ENCODE measurements at regions of chr4 and their contacts with region 1.

Region 1: DNA sequence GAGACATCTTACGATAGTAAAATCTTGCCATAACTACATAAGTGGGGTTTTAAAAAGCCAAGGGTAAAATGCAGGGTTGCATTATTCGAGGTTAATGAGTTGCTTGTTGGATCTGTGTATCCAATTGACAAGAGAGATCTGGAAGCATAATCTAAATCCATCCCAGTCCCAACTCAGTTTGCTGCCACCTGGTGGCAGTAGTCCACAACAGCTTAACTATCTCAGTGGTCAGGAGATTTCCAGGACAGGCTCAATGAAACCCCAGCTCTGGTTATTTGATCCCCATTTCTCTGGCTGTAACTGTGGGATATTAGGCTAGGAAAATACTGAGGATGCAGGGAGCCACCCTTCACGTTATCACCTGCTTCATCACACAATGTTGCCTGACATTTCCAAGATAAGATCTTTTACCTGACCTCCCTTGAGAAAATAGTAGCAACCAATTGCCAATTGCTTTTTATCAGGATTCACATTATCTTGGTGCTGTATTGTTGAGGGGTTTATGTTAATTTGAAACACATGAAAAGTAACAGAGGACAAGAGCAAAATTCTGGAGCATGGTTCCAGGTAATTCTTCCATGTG is 88.2 kb upstream of the TNIP3 start:
- DNase-seq: peak; percentile 73
- H3K4me3 Mint-ChIP-seq: no peak overlapping the region
- H3K27ac Mint-ChIP-seq: no peak overlapping the region
- H3K4me1 Mint-ChIP-seq: peaks cover 60% of the 10 kb centered on the region
- H3K27me3 Mint-ChIP-seq: no peaks in the 10 kb centered on the region

Region 2: DNA sequence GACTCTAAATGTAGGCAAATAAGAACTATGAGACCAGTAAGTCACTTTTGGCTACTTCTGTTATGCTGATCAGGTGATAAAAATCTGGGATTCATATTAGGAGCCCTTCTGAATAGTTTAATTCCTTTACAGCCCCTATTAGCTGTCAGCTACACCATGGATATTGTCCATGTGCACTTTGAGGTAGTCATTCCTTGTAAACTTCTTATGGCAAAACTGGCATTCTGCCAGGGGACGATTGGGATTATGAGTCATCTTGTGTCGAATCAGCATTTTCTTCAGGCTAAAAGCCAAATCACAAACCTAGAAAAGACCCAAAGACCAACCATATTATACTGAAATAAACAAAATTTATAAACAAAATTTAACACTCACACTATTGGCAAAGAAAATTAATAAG is 557.3 kb before region 1 on chr4:
- CTCF ChIA-PET with region 1: no interaction called
- intact Hi-C with region 1: no loop called
- DNase-seq: no peak
- H3K4me3 Mint-ChIP-seq: no peak overlapping the region
- H3K27ac Mint-ChIP-seq: no peak overlapping the region
- H3K4me1 Mint-ChIP-seq: no peaks in the 10 kb centered on the region
- H3K27me3 Mint-ChIP-seq: peaks cover 2% of the 10 kb centered on the region

Region 3: DNA sequence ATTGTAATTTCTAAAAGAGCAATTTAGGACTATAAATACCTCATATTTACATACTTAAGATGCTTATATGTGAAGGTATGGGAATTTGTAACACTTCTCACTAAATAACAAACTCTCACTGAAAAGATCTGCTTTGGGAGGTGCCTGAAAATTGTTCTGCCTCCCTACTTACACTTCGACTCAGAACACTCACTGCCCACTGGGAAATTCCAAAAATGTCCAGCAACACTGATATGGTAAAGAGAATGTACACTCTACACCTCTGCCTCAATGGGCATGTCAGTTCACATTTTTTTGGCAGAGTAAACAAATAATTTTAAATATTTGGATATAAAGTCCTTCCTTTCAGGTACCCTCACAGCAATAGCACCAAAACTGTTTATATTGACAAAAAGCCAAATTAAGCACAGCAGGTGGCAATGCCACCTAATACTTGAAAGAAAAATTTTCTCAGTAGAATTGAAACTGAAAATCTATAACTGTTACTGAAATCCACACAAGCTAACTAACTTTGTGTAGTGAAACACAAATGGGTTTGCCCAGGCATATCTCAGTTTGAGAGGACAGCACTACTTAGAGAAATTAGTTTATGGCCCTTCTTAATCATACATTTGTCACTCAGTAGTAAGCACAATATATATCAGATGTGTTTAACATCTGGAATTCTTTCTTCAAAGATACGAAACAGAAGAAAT is 396.9 kb before region 1 on chr4:
- CTCF ChIA-PET with region 1: no interaction called
- intact Hi-C with region 1: loop called (anchors 5 kb)
- DNase-seq: peak; percentile 13
- H3K4me3 Mint-ChIP-seq: no peak overlapping the region
- H3K27ac Mint-ChIP-seq: no peak overlapping the region
- H3K4me1 Mint-ChIP-seq: peaks cover 12% of the 10 kb centered on the region
- H3K27me3 Mint-ChIP-seq: no peaks in the 10 kb centered on the region

Region 4: DNA sequence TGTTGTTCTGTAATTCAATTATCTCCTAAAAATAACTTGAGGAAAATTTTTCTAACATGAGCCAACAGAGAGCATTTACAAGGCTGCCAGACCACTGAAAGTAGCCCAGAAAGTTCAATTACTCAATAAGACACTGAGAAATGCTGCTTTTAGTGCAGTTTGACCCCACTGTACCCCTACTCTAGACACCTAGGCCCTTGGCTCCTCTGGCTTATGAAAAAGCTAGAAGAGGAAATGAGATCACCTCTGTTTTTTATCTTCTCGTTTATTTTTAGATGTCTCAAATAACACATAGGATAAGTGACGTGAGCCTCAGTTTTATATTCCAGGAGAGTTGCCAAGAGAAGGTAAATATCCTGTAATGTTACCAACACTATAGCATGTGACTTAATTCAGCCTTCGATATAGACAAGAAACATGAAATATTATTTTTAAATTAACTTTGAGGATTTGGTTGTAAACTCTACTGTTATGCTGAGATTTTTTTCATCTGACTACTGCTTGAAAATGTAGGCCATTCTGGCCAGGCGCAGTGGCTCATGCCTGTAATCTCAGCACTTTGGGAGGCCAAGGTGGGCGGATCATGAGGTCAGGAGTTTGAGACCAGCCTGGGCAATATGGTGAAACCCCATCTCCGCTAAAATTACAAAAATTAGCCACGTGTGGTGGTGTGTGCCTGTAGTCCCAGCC is 112.6 kb before region 1 on chr4:
- CTCF ChIA-PET with region 1: no interaction called
- intact Hi-C with region 1: loop called (anchors 1 kb)
- DNase-seq: peak; percentile 29
- H3K4me3 Mint-ChIP-seq: no peak overlapping the region
- H3K27ac Mint-ChIP-seq: peak overlapping the region; percentile 79
- H3K4me1 Mint-ChIP-seq: peaks cover 57% of the 10 kb centered on the region
- H3K27me3 Mint-ChIP-seq: no peaks in the 10 kb centered on the region

Region 5: GRCh38 chr4:121156822-121157769 is 95.2 kb before region 1 on chr4:
- CTCF ChIA-PET with region 1: interaction called, 3 read pairs
- intact Hi-C with region 1: loop called (anchors 1 kb)
- DNase-seq: peak; percentile 42
- H3K4me3 Mint-ChIP-seq: peak overlapping the region; percentile 78
- H3K27ac Mint-ChIP-seq: no peak overlapping the region
- H3K4me1 Mint-ChIP-seq: peaks cover 43% of the 10 kb centered on the region
- H3K27me3 Mint-ChIP-seq: no peaks in the 10 kb centered on the region

Region 6: GRCh38 chr4:121199742-121200561 is 52.4 kb before region 1 on chr4:
- CTCF ChIA-PET with region 1: interaction called, 15 read pairs
- intact Hi-C with region 1: loop called (anchors 1 kb)
- DNase-seq: peak; percentile 69
- H3K4me3 Mint-ChIP-seq: no peak overlapping the region
- H3K27ac Mint-ChIP-seq: peak overlapping the region; percentile 62
- H3K4me1 Mint-ChIP-seq: peaks cover 24% of the 10 kb centered on the region
- H3K27me3 Mint-ChIP-seq: no peaks in the 10 kb centered on the region

Region 7: DNA sequence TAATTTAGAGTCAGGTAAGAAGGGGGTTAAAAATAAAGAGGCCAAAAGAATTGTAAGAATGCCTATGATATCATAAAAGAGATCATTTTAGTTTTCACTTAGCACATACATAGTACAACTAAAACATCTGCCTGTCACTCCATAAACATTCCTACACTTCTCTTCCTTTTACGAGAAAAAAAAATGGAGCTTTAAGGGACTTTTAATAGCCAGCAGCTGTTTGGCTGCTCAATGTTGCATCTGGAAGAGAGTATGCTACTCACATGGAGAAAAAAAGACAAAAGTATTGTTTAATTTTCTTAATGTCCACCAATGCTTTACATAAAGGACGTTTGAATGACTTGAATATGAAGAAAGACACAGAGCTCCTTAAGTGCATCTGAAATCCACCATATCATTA is 39.5 kb before region 1 on chr4:
- CTCF ChIA-PET with region 1: no interaction called
- intact Hi-C with region 1: no loop called
- DNase-seq: no peak
- H3K4me3 Mint-ChIP-seq: no peak overlapping the region
- H3K27ac Mint-ChIP-seq: no peak overlapping the region
- H3K4me1 Mint-ChIP-seq: peaks cover 20% of the 10 kb centered on the region
- H3K27me3 Mint-ChIP-seq: no peaks in the 10 kb centered on the region

Region 8: DNA sequence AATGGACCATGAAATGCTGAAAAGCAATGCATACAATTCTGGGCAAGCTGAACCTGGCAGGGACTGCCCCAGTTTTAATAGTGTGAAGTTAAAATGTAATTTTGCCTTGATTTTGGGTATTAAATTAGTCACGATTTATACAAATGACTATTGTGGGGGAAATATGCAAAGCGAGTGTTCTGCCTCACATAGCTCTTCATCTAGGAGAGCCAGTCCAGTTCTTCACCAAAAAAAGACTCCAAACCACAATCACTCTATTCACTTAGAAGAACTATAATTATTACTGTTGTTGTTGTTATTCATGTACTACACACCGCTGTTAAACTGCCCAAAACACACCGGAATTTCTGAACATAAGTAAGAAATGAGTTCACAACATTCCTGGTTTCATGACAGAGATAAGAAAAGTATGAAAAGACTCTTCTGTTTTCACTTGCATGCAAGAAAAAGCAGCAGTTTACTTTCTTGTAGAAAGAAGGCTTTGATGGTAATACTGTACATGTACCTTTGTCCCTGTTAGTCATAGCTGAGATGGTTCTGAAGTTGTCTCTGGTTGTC is 26.6 kb after region 1 on chr4:
- CTCF ChIA-PET with region 1: interaction called, 4 read pairs
- intact Hi-C with region 1: loop called (anchors 1 kb)
- DNase-seq: peak; percentile 41
- H3K4me3 Mint-ChIP-seq: no peak overlapping the region
- H3K27ac Mint-ChIP-seq: peak overlapping the region; percentile 66
- H3K4me1 Mint-ChIP-seq: peaks cover 19% of the 10 kb centered on the region
- H3K27me3 Mint-ChIP-seq: peaks cover 5% of the 10 kb centered on the region

Region 9: DNA sequence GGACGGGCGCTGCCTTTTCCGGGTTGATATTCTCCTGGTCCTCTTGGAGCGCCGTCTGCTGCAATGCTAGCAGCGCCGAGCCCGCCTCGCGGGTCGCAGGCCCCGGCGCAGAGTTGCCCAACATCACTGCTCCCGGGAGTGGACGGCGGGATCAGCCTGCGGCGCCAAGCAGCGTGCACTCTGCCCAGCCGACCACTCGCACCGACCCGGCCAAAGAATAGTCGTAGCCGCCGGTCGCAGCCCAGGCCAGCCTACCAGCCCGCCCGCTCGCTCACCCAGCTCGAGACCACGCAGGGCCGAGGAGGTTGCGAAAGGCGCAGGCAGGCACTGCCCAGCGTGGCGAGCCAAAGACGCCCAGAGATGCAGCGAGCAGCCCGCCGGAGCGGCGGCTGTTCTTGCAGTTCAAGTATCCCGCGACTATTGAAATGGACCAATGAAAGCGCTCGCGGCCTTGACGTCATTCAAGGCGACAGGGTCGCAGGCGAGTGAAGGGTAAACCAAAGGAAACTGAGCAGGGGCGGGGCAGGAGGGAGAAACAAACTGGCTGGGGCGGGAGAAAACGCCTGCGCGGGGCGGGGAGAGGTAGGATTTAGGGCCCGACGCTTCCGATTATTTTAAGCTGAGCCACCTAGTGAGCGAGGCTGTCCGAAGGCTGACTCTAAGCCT is 571.3 kb after region 1 on chr4 and contains the start of gene CCNA2:
- CTCF ChIA-PET with region 1: no interaction called
- intact Hi-C with region 1: loop called (anchors 5 kb)
- DNase-seq: peak; percentile 99
- H3K4me3 Mint-ChIP-seq: peak within 1 kb of the TSS; percentile 98
- H3K27ac Mint-ChIP-seq: peak within 1 kb of the TSS; percentile 86
- H3K4me1 Mint-ChIP-seq: peaks cover 20% of the 10 kb centered on the region
- H3K27me3 Mint-ChIP-seq: no peaks in the 10 kb centered on the region
- total RNA-seq, gene CCNA2: 133 to 138 TPM

Measured in activated naive CD4-positive, alpha-beta T cell treated with anti-CD3 and anti-CD28 coated beads for 36 hours (primary cell).